H1 (cell line): ENCODE measurements at regions of chr1 and their contacts with region 1.

Region 1: DNA sequence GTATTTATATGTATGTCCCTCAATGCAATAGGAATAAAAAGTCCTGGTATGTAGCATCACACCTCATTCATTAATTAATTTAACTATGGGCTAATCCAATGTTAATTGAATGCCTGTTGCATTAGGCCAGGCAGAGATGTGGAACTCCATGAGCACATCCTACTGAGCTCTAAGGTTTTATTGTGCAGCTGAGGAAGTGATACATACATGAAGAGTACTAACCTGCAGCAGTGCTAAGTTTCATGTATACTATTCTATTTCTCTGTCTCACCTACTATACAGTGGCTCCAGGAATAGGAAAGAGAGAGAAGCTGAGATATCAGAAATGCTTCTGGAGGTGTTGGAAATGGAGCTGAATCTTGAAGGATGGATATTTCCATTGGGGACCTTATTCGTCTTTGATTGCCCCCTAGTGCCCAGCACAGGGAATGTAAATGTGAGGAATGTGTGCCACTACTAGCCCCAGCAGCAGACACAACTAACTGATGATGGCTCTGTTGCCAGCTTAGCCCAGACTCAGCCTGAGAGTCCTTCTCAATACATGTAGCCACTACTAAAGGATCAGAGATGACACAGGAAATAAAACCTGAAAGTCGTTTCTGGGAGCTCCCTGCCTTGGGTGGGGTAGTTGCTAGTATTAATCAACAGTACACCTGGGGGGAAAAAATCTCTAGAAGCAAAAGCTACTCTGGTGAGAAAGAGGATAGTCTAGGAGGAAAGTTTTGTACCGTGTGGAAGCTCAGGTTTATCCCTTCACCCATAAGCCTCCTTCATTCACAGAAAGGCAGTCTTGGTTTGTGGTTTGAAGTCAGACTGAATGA is 173.3 kb upstream of the FOXD3 start:
- DNase-seq: peak; percentile 21 to 60
- H3K4me3 ChIP-seq: no peak overlapping the region
- H3K27ac ChIP-seq: no peak overlapping the region
- H3K4me1 ChIP-seq: peaks cover 0 to 3% (median 3%) of the 10 kb centered on the region in 4 experiments; a peak in 5 of 7 replicates
- H3K27me3 ChIP-seq: no peaks in the 10 kb centered on the region; a peak in 1 of 7 replicates
- CTCF ChIP-seq: peak; percentile 33 to 82 (median 75)
- EP300 ChIP-seq: no peak
- POLR2A ChIP-seq: no peak
- RAD21 ChIP-seq: peak; percentile 70 to 77

Region 2: GRCh38 chr1:63004868-63005267 is 144.2 kb before region 1 on chr1:
- CTCF ChIA-PET with region 1: interaction called, 16 read pairs
- POLR2A ChIA-PET with region 1: no interaction called
- DNase-seq: no peak
- H3K4me3 ChIP-seq: no peak overlapping the region
- H3K27ac ChIP-seq: no peak overlapping the region
- H3K4me1 ChIP-seq: peaks cover 0 to 2% (median 0%) of the 10 kb centered on the region in 4 experiments; a peak in 2 of 7 replicates
- H3K27me3 ChIP-seq: no peaks in the 10 kb centered on the region
- CTCF ChIP-seq: peak in 2 of 3 experiments; percentile 71 to 77; a peak in 3 of 4 replicates
- EP300 ChIP-seq: no peak
- POLR2A ChIP-seq: no peak
- RAD21 ChIP-seq: peak; percentile 94 to 95

Region 3: DNA sequence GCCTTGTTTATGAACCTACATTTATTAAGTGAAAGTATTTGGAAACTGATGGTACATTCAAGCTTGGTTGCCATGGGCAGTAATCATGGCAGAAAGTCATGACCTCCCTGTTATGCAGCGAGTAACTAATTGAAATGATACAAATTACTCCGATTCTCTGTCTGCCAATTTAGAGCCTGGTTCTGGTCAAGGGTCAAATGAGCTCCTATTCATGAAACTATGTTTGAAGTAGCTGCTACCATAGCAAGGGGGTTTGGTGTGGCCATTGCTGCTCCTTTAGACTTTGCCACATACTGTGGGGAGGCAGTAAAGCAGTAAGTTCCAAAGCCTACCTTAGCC is 13.9 kb before region 1 on chr1:
- CTCF ChIA-PET with region 1: interaction called, 13 read pairs
- POLR2A ChIA-PET with region 1: no interaction called
- DNase-seq: no peak
- H3K4me3 ChIP-seq: no peak overlapping the region
- H3K27ac ChIP-seq: no peak overlapping the region
- H3K4me1 ChIP-seq: peaks cover 0 to 5% (median 0%) of the 10 kb centered on the region in 4 experiments; a peak in 1 of 7 replicates
- H3K27me3 ChIP-seq: no peaks in the 10 kb centered on the region
- CTCF ChIP-seq: no peak
- EP300 ChIP-seq: no peak
- POLR2A ChIP-seq: no peak
- RAD21 ChIP-seq: no peak